CD4-positive, alpha-beta memory T cell (primary cell): ENCODE measurements at regions of chr6 and their contacts with region 1.

Region 1: DNA sequence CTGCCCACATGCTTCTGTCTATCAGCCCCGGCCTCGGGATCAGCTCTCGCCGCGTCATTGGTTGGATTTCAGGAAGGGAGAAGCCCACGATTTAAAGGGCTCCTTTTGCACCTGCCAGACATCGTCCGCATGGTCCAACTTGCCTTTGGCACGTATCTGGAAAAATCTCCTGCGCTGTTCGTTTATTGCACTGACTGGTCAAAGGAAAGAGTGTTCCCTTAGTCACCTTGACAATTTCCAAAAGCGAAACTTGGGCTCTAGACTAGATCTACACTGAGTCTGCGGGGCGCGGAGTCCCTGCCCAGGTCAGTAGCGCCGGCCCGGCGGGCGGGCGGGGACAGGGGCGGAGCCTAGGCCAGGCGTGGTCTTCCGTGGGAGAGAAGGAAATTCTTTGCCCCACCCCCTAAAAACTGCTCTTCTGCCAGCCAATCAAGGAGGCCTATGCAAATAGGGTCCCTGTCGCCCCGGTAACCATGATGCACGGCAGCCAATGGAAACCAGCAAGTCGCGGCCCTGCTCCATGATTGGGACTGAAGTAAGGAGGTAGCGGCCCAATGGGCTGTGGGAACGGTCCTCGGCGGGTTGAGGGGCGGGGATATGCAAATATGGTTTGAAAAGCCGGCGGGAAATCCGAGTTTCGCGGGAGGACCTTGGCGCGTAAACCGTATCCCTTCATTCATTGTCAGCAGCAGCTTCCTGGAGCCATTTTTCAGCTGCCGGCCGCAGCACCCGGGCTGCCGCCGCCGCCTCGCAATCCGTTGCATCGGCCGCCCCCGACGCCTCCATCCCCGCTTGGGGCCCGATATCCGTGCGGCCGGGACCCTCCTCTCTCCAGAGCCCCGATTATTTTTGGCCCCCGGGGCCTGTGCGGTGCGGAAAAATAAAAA is at the start of gene E2F3:
- DNase-seq: peak; percentile 97 to 100 (median 99)
- H3K4me3 ChIP-seq: peak within 1 kb of the TSS; percentile 19 to 72
- H3K4me3 Mint-ChIP-seq: peak within 1 kb of the TSS; percentile 89 to 97 (median 92)
- H3K27ac ChIP-seq: peak within 1 kb of the TSS; percentile 73
- H3K27ac Mint-ChIP-seq: peak within 1 kb of the TSS; percentile 85 to 97 (median 92)
- H3K4me1 ChIP-seq: peaks cover 27% of the 10 kb centered on the region
- H3K4me1 Mint-ChIP-seq: peaks cover 20 to 37% (median 28%) of the 10 kb centered on the region in 4 donors
- H3K27me3 ChIP-seq: no peaks in the 10 kb centered on the region
- H3K27me3 Mint-ChIP-seq: no peaks in the 10 kb centered on the region
- total RNA-seq, gene E2F3: 25.2 to 25.5 TPM

Region 2: GRCh38 chr6:20092071-20092566 is 309.3 kb before region 1 on chr6:
- CTCF ChIA-PET with region 1: no interaction called
- POLR2A ChIA-PET with region 1: no interaction called
- intact Hi-C with region 1: loop called (anchors 2 kb)
- DNase-seq: peak in 4 of 5 donors; percentile 5 to 28 (median 10)
- H3K4me3 ChIP-seq: no peak overlapping the region
- H3K4me3 Mint-ChIP-seq: no peak overlapping the region
- H3K27ac ChIP-seq: no peak overlapping the region
- H3K27ac Mint-ChIP-seq: no peak overlapping the region
- H3K4me1 ChIP-seq: no peaks in the 10 kb centered on the region
- H3K4me1 Mint-ChIP-seq: no peaks in the 10 kb centered on the region
- H3K27me3 ChIP-seq: no peaks in the 10 kb centered on the region
- H3K27me3 Mint-ChIP-seq: no peaks in the 10 kb centered on the region

Region 3: GRCh38 chr6:20173833-20174792 is 227.3 kb before region 1 on chr6:
- CTCF ChIA-PET with region 1: no interaction called
- POLR2A ChIA-PET with region 1: no interaction called
- intact Hi-C with region 1: no loop called
- DNase-seq: peak in 2 of 5 donors; percentile 4 to 11
- H3K4me3 ChIP-seq: no peak overlapping the region
- H3K4me3 Mint-ChIP-seq: peak overlapping the region in 7 of 8 donors; percentile 17 to 76 (median 54)
- H3K27ac ChIP-seq: no peak overlapping the region
- H3K27ac Mint-ChIP-seq: peak overlapping the region in 6 of 7 donors; percentile 3 to 81 (median 66)
- H3K4me1 ChIP-seq: peaks cover 19% of the 10 kb centered on the region
- H3K4me1 Mint-ChIP-seq: peaks cover 30 to 37% (median 32%) of the 10 kb centered on the region in 4 donors
- H3K27me3 ChIP-seq: no peaks in the 10 kb centered on the region
- H3K27me3 Mint-ChIP-seq: no peaks in the 10 kb centered on the region

Region 4: GRCh38 chr6:20291764-20292580 is 109.5 kb before region 1 on chr6:
- CTCF ChIA-PET with region 1: interaction called, 33 read pairs
- POLR2A ChIA-PET with region 1: interaction called, 6 read pairs
- intact Hi-C with region 1: loop called (anchors 1 kb)
- DNase-seq: peak; percentile 55 to 68 (median 61)
- H3K4me3 ChIP-seq: no peak overlapping the region
- H3K4me3 Mint-ChIP-seq: peak overlapping the region in 7 of 8 donors; percentile 4 to 65 (median 34)
- H3K27ac ChIP-seq: no peak overlapping the region
- H3K27ac Mint-ChIP-seq: peak overlapping the region in 4 of 7 donors; percentile 8 to 63 (median 47)
- H3K4me1 ChIP-seq: peaks cover 13% of the 10 kb centered on the region
- H3K4me1 Mint-ChIP-seq: peaks cover 8 to 29% (median 14%) of the 10 kb centered on the region in 4 donors
- H3K27me3 ChIP-seq: no peaks in the 10 kb centered on the region
- H3K27me3 Mint-ChIP-seq: no peaks in the 10 kb centered on the region

Region 5: DNA sequence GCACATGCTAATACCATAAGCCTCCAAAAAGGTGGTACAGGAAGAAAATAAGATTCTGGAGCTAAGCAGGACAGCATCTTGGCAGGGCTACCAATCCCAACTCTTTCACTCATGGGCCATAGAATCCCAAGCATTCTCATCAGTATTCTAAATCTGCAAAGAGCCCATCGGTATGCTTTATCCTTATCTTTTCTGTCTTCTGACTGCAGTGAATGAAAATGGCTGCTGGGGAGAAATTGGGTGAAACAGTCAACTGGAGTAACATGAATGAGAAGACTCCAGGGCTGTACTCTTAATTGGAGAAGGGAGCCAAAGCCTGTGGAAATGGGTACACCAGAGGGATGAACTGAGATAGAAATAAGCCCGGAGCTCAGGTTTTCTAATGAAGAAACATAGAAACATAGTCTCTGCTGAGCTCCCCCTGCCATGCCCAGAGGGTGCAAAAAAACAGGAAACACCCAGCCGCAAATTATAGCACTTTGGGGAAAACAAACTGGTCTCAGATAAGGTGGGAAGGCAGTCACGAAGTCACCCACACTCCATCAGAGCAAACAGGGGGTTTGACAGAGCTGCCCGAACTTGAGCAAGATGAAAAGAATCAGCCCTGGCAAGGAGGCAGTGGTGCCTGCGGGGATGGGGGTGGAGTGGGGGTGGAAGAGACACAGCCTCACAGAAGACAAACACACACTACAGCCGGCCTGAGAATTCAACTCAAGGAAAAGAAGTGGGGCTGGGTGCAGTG is 35.2 kb before region 1 on chr6:
- CTCF ChIA-PET with region 1: interaction called, 48 read pairs
- POLR2A ChIA-PET with region 1: interaction called, 102 read pairs
- intact Hi-C with region 1: loop called (anchors 1 kb)
- DNase-seq: peak; percentile 37 to 48 (median 44)
- H3K4me3 ChIP-seq: peak overlapping the region; percentile 6 to 21
- H3K4me3 Mint-ChIP-seq: peak overlapping the region; percentile 64 to 91 (median 82)
- H3K27ac ChIP-seq: peak overlapping the region; percentile 42
- H3K27ac Mint-ChIP-seq: peak overlapping the region; percentile 86 to 97 (median 92)
- H3K4me1 ChIP-seq: peaks cover 61% of the 10 kb centered on the region
- H3K4me1 Mint-ChIP-seq: peaks cover 47 to 67% (median 57%) of the 10 kb centered on the region in 4 donors
- H3K27me3 ChIP-seq: no peaks in the 10 kb centered on the region
- H3K27me3 Mint-ChIP-seq: no peaks in the 10 kb centered on the region

Region 6: DNA sequence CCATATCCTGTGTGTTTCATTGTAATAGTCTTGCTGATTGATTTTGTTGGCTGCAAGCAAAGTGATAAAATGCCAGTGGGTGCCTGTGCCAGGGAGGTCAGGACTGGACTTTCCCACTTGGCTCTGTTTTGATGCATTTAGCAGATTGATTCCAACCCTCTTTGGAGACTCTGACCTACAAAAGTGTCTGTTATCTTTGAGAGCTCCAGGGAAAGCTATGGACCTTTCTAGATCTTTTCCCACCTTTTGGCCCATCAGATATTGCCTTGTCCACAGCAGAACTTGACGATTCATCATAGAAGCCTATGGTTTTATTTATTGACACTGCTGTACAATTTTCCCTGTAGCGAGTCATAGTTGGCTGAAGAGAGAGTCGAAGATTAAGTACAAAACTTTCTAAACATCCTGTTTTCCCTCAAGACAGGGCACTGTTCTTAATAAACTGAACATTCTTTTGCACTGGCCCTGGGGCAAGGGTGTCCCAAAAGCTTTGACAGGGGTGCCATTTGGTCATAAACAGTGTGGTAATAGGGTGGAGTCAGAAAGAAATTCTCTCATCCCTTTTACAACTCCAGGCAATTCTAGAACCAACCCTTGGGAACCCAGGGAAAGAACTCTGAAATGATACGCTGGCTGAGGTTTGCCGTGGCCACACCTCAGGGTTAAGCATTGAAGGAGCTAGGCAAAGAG is 53.9 kb after region 1 on chr6:
- CTCF ChIA-PET with region 1: interaction called, 10 read pairs
- POLR2A ChIA-PET with region 1: interaction called, 3 read pairs
- intact Hi-C with region 1: loop called (anchors 1 kb)
- DNase-seq: no peak
- H3K4me3 ChIP-seq: no peak overlapping the region
- H3K4me3 Mint-ChIP-seq: no peak overlapping the region
- H3K27ac ChIP-seq: no peak overlapping the region
- H3K27ac Mint-ChIP-seq: peak overlapping the region in 1 of 7 donors; percentile 77
- H3K4me1 ChIP-seq: peaks cover 21% of the 10 kb centered on the region
- H3K4me1 Mint-ChIP-seq: peaks cover 15 to 35% (median 24%) of the 10 kb centered on the region in 4 donors
- H3K27me3 ChIP-seq: no peaks in the 10 kb centered on the region
- H3K27me3 Mint-ChIP-seq: no peaks in the 10 kb centered on the region

Region 7: GRCh38 chr6:21157186-21157929 is 755.9 kb after region 1 on chr6:
- CTCF ChIA-PET with region 1: no interaction called
- POLR2A ChIA-PET with region 1: no interaction called
- intact Hi-C with region 1: no loop called
- DNase-seq: no peak
- H3K4me3 ChIP-seq: no peak overlapping the region
- H3K4me3 Mint-ChIP-seq: no peak overlapping the region
- H3K27ac ChIP-seq: no peak overlapping the region
- H3K27ac Mint-ChIP-seq: no peak overlapping the region
- H3K4me1 ChIP-seq: no peaks in the 10 kb centered on the region
- H3K4me1 Mint-ChIP-seq: peaks cover 0 to 3% (median 1%) of the 10 kb centered on the region in 4 donors
- H3K27me3 ChIP-seq: no peaks in the 10 kb centered on the region
- H3K27me3 Mint-ChIP-seq: no peaks in the 10 kb centered on the region

Region 8: GRCh38 chr6:21593412-21593926 is 1192.0 kb after region 1 on chr6 and contains the start of gene SOX4:
- CTCF ChIA-PET with region 1: no interaction called
- POLR2A ChIA-PET with region 1: no interaction called
- intact Hi-C with region 1: loop called (anchors 10 kb)
- DNase-seq: peak; percentile 43 to 74 (median 59)
- H3K4me3 ChIP-seq: peak within 1 kb of the TSS; percentile 51 to 57
- H3K4me3 Mint-ChIP-seq: peak within 1 kb of the TSS; percentile 86 to 93 (median 89)
- H3K27ac ChIP-seq: no peak within 1 kb of the TSS
- H3K27ac Mint-ChIP-seq: peak within 1 kb of the TSS in 5 of 7 donors; percentile 12 to 78 (median 57)
- H3K4me1 ChIP-seq: peaks cover 36% of the 10 kb centered on the region
- H3K4me1 Mint-ChIP-seq: peaks cover 15 to 29% (median 19%) of the 10 kb centered on the region in 4 donors
- H3K27me3 ChIP-seq: peaks cover 38% of the 10 kb centered on the region
- H3K27me3 Mint-ChIP-seq: peaks cover 27 to 35% of the 10 kb centered on the region in 2 donors
- total RNA-seq, gene SOX4: 0.12 to 0.14 TPM

Region 9: DNA sequence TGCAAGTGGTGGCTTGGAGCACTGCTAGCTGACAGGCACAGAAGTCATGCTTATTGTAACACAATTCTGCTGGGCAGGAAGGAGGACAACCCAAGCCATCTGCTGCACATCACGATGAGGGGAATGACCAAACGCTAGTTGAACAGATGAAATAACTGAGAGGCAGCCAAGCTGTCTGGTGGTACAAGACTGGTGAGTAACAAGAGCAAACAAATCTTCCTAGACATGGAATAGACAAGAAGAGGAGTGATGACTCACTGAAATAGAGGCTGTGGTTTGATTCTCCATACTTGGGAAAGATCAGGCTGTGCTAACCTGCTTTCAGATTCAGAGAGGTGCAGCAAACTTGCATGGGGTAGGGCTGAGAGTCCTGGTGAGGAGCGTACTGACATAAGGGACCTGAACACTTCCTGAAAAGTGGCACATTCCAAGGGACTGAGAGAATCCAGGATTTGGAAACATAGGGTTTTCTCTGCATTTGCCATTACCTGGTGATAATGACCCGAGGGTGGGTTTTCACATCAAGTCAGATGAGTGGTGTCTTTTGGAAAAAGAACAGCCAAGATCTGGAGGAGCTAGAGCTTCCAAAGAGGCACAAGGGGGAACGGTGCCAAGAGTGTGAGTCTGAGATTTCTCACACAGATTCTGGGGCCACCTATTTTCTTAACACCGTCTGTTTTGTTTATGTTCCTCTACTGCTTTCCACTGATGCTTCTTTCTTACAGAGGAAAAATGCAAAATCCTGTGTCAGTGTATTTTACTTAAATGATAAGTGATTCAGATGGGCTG is 1835.4 kb after region 1 on chr6:
- CTCF ChIA-PET with region 1: no interaction called
- POLR2A ChIA-PET with region 1: no interaction called
- intact Hi-C with region 1: no loop called
- DNase-seq: no peak
- H3K4me3 ChIP-seq: no peak overlapping the region
- H3K4me3 Mint-ChIP-seq: no peak overlapping the region
- H3K27ac ChIP-seq: no peak overlapping the region
- H3K27ac Mint-ChIP-seq: no peak overlapping the region
- H3K4me1 ChIP-seq: no peaks in the 10 kb centered on the region
- H3K4me1 Mint-ChIP-seq: no peaks in the 10 kb centered on the region
- H3K27me3 ChIP-seq: no peaks in the 10 kb centered on the region
- H3K27me3 Mint-ChIP-seq: no peaks in the 10 kb centered on the region